ENCODE measurements at regions of chrX and their contacts with region 1.

Region 1: DNA sequence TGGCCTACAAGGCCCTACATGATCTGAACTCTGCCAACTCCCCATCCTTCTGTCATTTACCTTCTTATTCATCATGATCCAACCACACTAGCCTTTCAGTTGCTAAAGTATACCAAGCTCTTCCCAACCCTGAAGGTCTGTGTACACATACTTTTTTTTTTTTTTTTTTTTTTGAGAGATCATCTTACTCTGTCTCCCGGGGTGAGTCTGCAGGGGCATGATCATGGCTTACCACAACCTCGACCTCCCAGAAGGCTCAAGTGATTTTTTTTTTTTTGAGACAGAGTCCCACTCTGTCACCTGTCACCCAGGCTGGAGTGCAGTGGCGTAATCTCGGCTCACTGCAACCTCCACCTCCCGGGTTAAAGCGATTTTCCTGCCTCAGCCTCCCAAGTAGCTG is 5.9 kb upstream of the UTP14A start:
- DNase-seq: no peak
- ATAC-seq: no peak
- H3K4me3 ChIP-seq: no peak overlapping the region
- H3K4me3 Mint-ChIP-seq: no peak overlapping the region
- H3K27ac ChIP-seq: no peak overlapping the region
- H3K27ac Mint-ChIP-seq: no peak overlapping the region
- H3K4me1 ChIP-seq: no peaks in the 10 kb centered on the region
- H3K4me1 Mint-ChIP-seq: no peaks in the 10 kb centered on the region
- H3K27me3 ChIP-seq: no peaks in the 10 kb centered on the region
- H3K27me3 Mint-ChIP-seq: no peaks in the 10 kb centered on the region
- CTCF ChIP-seq: no peak

Region 2: GRCh38 chrX:129876771-129877305 is 23.2 kb before region 1 on chrX:
- CTCF ChIA-PET with region 1: no interaction called
- POLR2A ChIA-PET with region 1: no interaction called
- intact Hi-C with region 1: no loop called
- DNase-seq: no peak
- ATAC-seq: no peak
- H3K4me3 ChIP-seq: no peak overlapping the region
- H3K4me3 Mint-ChIP-seq: no peak overlapping the region
- H3K27ac ChIP-seq: no peak overlapping the region
- H3K27ac Mint-ChIP-seq: no peak overlapping the region
- H3K4me1 ChIP-seq: no peaks in the 10 kb centered on the region
- H3K4me1 Mint-ChIP-seq: no peaks in the 10 kb centered on the region
- H3K27me3 ChIP-seq: no peaks in the 10 kb centered on the region
- H3K27me3 Mint-ChIP-seq: no peaks in the 10 kb centered on the region
- CTCF ChIP-seq: no peak

Region 3: DNA sequence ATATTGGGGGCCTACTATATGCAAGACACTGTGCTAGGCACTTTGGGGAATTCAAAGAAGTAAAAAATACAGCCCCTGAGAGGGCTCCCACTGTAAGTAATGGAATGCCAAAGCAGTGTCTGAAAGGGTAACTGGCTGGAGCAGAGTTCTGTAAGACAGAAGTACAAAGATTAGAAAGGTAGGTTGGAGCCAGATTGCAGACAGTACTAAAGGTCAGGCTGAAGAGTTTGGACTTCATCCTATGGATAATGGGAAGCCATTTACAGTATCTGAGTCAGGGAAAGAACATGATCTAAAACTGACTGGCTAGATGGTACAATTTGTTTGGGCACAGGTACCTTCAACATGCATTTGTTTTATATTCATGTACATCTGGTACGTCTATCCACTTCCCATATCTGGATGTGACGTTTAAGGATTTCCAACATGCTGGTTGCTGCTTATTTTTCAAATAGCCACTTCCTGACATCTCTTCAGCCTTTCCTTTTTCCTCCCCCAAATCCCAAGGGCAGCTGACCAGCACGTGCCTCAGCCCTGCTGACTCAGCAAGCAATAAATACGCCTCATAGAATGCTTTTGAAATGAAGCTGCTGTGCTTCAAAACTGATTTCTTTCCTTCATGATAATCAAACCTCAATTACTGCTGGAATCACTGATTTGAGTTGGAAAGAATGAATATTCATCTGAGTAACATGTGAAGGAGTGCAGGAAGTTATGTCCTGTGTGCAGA is 993.5 kb after region 1 on chrX:
- CTCF ChIA-PET with region 1: no interaction called
- POLR2A ChIA-PET with region 1: no interaction called
- intact Hi-C with region 1: loop called in 1 of 2 experiments (anchors 5 kb)
- DNase-seq: no peak
- ATAC-seq: no peak
- H3K4me3 ChIP-seq: no peak overlapping the region
- H3K4me3 Mint-ChIP-seq: no peak overlapping the region
- H3K27ac ChIP-seq: no peak overlapping the region
- H3K27ac Mint-ChIP-seq: no peak overlapping the region
- H3K4me1 ChIP-seq: peaks cover 6% of the 10 kb centered on the region
- H3K4me1 Mint-ChIP-seq: peaks cover 11% of the 10 kb centered on the region
- H3K27me3 ChIP-seq: no peaks in the 10 kb centered on the region
- H3K27me3 Mint-ChIP-seq: no peaks in the 10 kb centered on the region
- CTCF ChIP-seq: no peak

Measured in CD4-positive, alpha-beta T cell (primary cell).